ENCODE measurements at regions of chr12 and their contacts with region 1.

Region 1: DNA sequence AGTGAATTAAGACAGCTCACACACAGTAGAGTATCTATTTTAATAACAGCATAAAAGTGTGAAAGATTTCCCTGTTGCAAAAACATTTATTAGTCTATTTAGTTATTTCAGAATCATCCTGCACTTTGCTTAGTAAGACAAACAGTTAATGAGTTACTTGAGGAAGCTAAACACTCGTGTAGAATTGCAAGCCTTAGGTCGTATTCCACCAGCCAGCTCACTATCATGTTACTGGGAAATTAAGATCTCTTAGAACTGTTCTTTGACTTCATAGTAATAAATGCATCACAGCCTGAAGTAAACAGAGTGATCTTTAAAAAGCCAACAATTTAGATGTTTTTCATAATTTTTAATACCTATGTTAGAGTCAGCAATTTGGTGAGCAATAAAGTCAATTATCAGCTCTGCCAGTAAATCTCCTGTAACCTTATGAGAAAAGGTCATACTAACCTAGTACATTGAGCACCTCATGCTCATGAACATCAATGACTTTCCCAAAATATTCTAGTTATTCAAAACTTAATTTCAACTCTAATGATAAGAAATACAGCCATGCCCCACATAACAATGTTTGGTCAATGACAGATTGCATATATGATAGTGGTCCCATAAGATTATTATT is 26.7 kb upstream of the ETNK1 start:
- DNase-seq: no peak
- H3K4me3 Mint-ChIP-seq: no peak overlapping the region
- H3K27ac Mint-ChIP-seq: no peak overlapping the region
- H3K4me1 Mint-ChIP-seq: peaks cover 18% of the 10 kb centered on the region
- H3K27me3 Mint-ChIP-seq: no peaks in the 10 kb centered on the region

Region 2: GRCh38 chr12:22658214-22658613 is 60.0 kb after region 1 on chr12:
- CTCF ChIA-PET with region 1: no interaction called
- POLR2A ChIA-PET with region 1: no interaction called
- intact Hi-C with region 1: loop called (anchors 1 kb)
- DNase-seq: peak; percentile 44
- H3K4me3 Mint-ChIP-seq: peak overlapping the region; percentile 27
- H3K27ac Mint-ChIP-seq: peak overlapping the region; percentile 65
- H3K4me1 Mint-ChIP-seq: peaks cover 32% of the 10 kb centered on the region
- H3K27me3 Mint-ChIP-seq: no peaks in the 10 kb centered on the region